ENCODE measurements at regions of chr12 and their contacts with region 1.

Region 1: DNA sequence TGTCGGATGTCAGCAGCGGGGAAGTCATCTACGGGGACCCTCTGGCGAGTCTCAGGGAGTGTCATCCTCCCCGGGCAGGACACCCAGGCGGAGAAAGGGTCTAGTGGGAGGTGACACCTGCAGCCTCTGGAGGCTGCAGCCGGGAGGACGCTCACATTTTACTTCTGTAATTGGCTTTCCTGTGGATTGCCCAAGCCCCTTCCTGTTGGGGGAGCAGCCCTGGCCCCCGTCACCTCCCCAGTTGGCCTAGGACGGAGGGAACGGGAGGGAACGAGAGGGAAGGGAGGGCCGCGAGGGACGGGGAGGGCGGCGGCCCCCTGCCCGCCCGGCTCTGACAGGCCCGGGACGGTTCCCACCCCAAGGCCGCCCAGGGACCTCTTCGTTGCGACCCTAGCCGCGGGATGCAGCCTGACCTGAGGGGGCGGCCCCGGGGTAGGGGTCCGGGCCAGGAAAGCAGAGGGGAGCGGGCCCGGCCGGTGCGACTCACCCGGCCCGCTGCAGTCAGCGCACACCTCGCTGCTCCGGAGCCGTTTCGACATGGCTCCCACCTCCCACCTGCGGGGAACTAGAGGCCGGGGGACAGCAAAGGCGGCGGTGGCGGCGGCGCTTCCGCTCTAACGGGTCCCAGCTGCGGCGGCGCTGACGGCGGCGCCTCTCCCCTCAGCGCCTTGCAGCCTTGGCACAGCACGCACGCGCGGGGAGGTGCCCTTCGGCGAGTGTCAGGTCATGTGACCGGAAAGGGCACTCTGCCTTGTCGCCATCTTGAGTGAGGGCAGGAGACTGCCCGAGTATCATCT is at the start of gene GIT2:
- DNase-seq: peak; percentile 88 to 95 (median 93)
- ATAC-seq: peak; percentile 81
- H3K4me3 ChIP-seq: peak within 1 kb of the TSS; percentile 86
- H3K4me3 Mint-ChIP-seq: peak within 1 kb of the TSS; percentile 90 to 100 (median 96)
- H3K27ac ChIP-seq: peak within 1 kb of the TSS; percentile 84
- H3K27ac Mint-ChIP-seq: peak within 1 kb of the TSS; percentile 84 to 100 (median 96)
- H3K4me1 ChIP-seq: peaks cover 22 to 33% of the 10 kb centered on the region in 2 donors
- H3K4me1 Mint-ChIP-seq: peaks cover 42 to 77% (median 66%) of the 10 kb centered on the region in 7 donors
- H3K27me3 ChIP-seq: no peaks in the 10 kb centered on the region
- H3K27me3 Mint-ChIP-seq: no peaks in the 10 kb centered on the region
- total RNA-seq, gene GIT2: 70.3 to 128 (median 109) TPM

Region 2: GRCh38 chr12:109573029-109573913 is 422.6 kb before region 1 on chr12 and contains the starts of genes MMAB and MVK:
- CTCF ChIA-PET with region 1: no interaction called
- POLR2A ChIA-PET with region 1: no interaction called
- intact Hi-C with region 1: loop called in 1 of 2 experiments (anchors 10 kb)
- DNase-seq: peak; percentile 87 to 99 (median 99)
- ATAC-seq: peak; percentile 97
- H3K4me3 ChIP-seq: peak within 1 kb of the TSS; percentile 75
- H3K4me3 Mint-ChIP-seq: peak within 1 kb of the TSS; percentile 90 to 97 (median 94)
- H3K27ac ChIP-seq: peak within 1 kb of the TSS; percentile 95
- H3K27ac Mint-ChIP-seq: peak within 1 kb of the TSS; percentile 87 to 100 (median 95)
- H3K4me1 ChIP-seq: peaks cover 13 to 16% of the 10 kb centered on the region in 2 donors
- H3K4me1 Mint-ChIP-seq: peaks cover 9 to 39% (median 36%) of the 10 kb centered on the region in 7 donors
- H3K27me3 ChIP-seq: no peaks in the 10 kb centered on the region
- H3K27me3 Mint-ChIP-seq: no peaks in the 10 kb centered on the region
- total RNA-seq, gene MMAB: 13.5 to 24.7 (median 20.1) TPM
- total RNA-seq, gene MVK: 10.0 to 14.8 (median 11.7) TPM

Region 3: DNA sequence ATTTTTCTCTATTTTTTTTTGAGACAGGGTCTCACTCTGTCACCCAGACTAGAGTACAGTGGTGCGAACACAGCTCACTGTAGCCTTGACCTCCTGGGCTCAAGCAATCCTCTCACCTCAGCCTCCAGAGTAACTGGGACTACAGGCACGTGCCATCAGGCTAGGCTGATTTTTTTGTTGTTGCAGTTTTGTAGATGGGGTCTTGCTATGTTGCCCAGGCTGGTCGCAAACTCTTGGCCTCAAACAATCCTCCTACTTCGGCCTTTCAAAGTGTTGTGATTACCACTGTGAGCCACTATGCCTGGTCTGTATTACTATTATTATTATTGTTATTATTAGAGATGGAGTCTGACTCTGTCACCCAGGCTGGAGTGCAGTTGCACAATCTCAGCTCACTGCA is 23.1 kb before region 1 on chr12:
- CTCF ChIA-PET with region 1: no interaction called
- POLR2A ChIA-PET with region 1: interaction called, 3 read pairs
- intact Hi-C with region 1: loop called in 1 of 2 experiments (anchors 1 kb)
- DNase-seq: no peak
- ATAC-seq: no peak
- H3K4me3 ChIP-seq: no peak overlapping the region
- H3K4me3 Mint-ChIP-seq: no peak overlapping the region
- H3K27ac ChIP-seq: no peak overlapping the region
- H3K27ac Mint-ChIP-seq: peak overlapping the region in 2 of 9 donors; percentile 41 to 60
- H3K4me1 ChIP-seq: peaks cover 0 to 6% of the 10 kb centered on the region in 2 donors
- H3K4me1 Mint-ChIP-seq: peaks cover 5 to 32% (median 8%) of the 10 kb centered on the region in 7 donors
- H3K27me3 ChIP-seq: no peaks in the 10 kb centered on the region
- H3K27me3 Mint-ChIP-seq: no peaks in the 10 kb centered on the region

Region 4: GRCh38 chr12:110048242-110049027 is 52.6 kb after region 1 on chr12 and contains the start of gene C12orf76:
- CTCF ChIA-PET with region 1: no interaction called
- POLR2A ChIA-PET with region 1: interaction called, 3 read pairs
- intact Hi-C with region 1: loop called (anchors 1 kb)
- DNase-seq: peak; percentile 67 to 92 (median 90)
- ATAC-seq: peak; percentile 100
- H3K4me3 ChIP-seq: peak within 1 kb of the TSS; percentile 81
- H3K4me3 Mint-ChIP-seq: peak within 1 kb of the TSS; percentile 84 to 97 (median 93)
- H3K27ac ChIP-seq: peak within 1 kb of the TSS; percentile 77
- H3K27ac Mint-ChIP-seq: peak within 1 kb of the TSS; percentile 90 to 99 (median 96)
- H3K4me1 ChIP-seq: peaks cover 19% of the 10 kb centered on the region in 2 donors
- H3K4me1 Mint-ChIP-seq: peaks cover 16 to 46% (median 34%) of the 10 kb centered on the region in 7 donors
- H3K27me3 ChIP-seq: no peaks in the 10 kb centered on the region
- H3K27me3 Mint-ChIP-seq: no peaks in the 10 kb centered on the region
- total RNA-seq, gene C12orf76: 14.6 to 28.7 (median 27.8) TPM

Region 5: GRCh38 chr12:110403146-110403975 is 407.5 kb after region 1 on chr12 and contains the start of gene ANAPC7:
- CTCF ChIA-PET with region 1: no interaction called
- POLR2A ChIA-PET with region 1: no interaction called
- intact Hi-C with region 1: loop called in 1 of 2 experiments (anchors 1 kb)
- DNase-seq: peak; percentile 74 to 90 (median 87)
- ATAC-seq: peak; percentile 98
- H3K4me3 ChIP-seq: peak within 1 kb of the TSS; percentile 99
- H3K4me3 Mint-ChIP-seq: peak within 1 kb of the TSS in 9 of 10 donors; percentile 96 to 100 (median 98)
- H3K27ac ChIP-seq: peak within 1 kb of the TSS; percentile 81
- H3K27ac Mint-ChIP-seq: peak within 1 kb of the TSS; percentile 97 to 100 (median 99)
- H3K4me1 ChIP-seq: peaks cover 6 to 15% of the 10 kb centered on the region in 2 donors
- H3K4me1 Mint-ChIP-seq: peaks cover 15 to 50% (median 29%) of the 10 kb centered on the region in 7 donors
- H3K27me3 ChIP-seq: no peaks in the 10 kb centered on the region
- H3K27me3 Mint-ChIP-seq: no peaks in the 10 kb centered on the region
- total RNA-seq, gene ANAPC7: 40.9 to 71.7 (median 59.7) TPM

Region 6: DNA sequence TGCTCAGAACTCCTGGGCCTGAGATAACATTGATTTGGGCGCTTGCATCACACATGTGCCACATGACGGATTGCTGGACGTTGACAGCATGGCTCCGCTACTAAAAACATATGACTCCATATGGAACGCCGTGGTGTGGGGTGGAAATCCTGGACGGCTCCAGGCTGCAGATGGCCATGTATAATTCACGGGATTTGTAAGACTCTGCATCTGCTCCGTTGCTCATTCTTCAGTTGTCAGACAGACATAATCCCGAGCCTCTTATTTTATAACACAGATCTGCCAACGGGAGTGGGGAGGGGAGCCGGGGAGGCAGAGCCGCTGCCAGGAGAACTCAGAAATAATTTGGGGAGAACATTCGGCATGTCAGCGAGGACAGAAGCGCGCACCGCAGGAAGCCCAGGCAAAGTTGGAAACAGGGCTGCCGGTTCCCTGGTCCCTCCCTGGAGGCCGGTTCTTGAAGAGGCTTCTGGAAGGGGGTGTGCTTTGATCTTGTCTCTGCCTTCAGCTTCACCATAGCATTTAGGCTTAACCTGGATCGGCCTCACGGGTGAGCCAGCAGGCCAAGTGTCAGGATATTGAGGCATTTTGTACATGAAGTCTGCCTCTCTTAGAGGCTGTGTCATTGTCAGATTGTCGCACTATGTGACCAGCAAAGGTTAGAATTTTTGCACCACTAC is 970.3 kb after region 1 on chr12:
- CTCF ChIA-PET with region 1: no interaction called
- POLR2A ChIA-PET with region 1: no interaction called
- intact Hi-C with region 1: no loop called
- DNase-seq: no peak
- ATAC-seq: no peak
- H3K4me3 ChIP-seq: no peak overlapping the region
- H3K4me3 Mint-ChIP-seq: no peak overlapping the region
- H3K27ac ChIP-seq: no peak overlapping the region
- H3K27ac Mint-ChIP-seq: no peak overlapping the region
- H3K4me1 ChIP-seq: no peaks in the 10 kb centered on the region
- H3K4me1 Mint-ChIP-seq: peaks cover 0 to 1% (median 0%) of the 10 kb centered on the region in 7 donors
- H3K27me3 ChIP-seq: no peaks in the 10 kb centered on the region
- H3K27me3 Mint-ChIP-seq: peaks cover 3 to 41% (median 18%) of the 10 kb centered on the region in 5 donors